AG04449 (cell line): ENCODE measurements at regions of chr11 and their contacts with region 1.

Region 1: GRCh38 chr11:87290304-87290922 is 252.7 kb downstream of the TMEM135 start:
- DNase-seq: peak; percentile 19
- H3K4me3 ChIP-seq: no peak overlapping the region
- CTCF ChIP-seq: peak; percentile 26

Region 2: DNA sequence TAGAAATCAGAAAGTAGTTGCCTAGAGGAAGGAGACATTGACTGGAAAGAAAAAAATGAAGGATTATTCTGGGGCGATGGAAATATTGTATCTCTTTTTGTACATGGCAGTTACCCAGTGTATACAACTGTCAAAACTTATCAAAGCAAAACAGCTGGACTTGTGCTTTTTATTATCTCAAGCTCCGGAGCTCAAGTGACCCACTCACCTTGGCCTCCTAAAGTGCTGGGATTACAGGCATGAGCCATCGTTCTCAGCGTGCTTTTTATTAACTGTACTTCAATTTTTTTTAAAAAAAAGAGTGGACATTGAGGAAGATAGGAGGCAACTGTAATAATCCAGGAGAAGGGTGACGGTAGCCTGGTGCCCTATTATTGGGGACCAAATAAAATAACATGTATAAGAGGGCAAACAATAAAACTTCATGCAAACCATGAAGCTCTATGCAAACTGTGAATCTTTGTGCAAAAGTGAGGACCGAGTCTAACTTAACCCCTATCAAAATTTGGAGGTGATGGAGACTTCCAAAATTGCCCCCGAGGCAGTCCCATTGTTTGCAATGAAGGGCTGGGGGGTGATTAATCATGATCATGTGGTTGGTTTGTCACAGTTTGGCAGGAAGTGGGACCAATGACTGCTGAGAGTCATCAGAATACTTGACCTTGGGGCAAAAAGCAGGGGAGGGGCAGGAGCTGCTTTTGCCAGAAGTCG is 358.7 kb before region 1 on chr11:
- CTCF ChIA-PET with region 1: interaction called, 241 read pairs
- POLR2A ChIA-PET with region 1: no interaction called
- DNase-seq: no peak
- H3K4me3 ChIP-seq: no peak overlapping the region
- CTCF ChIP-seq: no peak

Region 3: GRCh38 chr11:86947541-86947940 is 342.9 kb before region 1 on chr11:
- CTCF ChIA-PET with region 1: interaction called, 241 read pairs
- POLR2A ChIA-PET with region 1: no interaction called
- DNase-seq: no peak
- H3K4me3 ChIP-seq: no peak overlapping the region
- CTCF ChIP-seq: no peak

Region 4: DNA sequence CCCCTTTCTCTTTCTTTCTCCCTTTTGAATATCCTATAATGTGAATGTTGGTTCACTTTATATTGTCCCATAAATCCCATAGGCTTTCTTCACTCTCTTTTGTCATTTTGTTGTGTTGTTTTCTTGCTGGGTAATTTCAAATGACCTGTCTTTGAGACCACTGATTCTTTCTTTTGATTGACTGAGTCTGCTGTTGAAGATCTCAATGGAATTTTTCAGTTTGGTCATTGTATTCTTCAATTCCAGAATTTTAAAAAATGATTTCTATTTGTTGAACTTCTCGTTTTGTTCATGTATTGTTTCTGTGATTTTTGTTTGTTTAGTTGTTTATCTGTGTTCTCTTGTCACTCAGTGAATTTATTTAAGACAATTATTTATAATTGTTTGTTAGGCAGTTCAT is 317.7 kb before region 1 on chr11:
- CTCF ChIA-PET with region 1: interaction called, 12 read pairs
- POLR2A ChIA-PET with region 1: no interaction called
- DNase-seq: no peak
- H3K4me3 ChIP-seq: no peak overlapping the region
- CTCF ChIP-seq: no peak

Region 5: DNA sequence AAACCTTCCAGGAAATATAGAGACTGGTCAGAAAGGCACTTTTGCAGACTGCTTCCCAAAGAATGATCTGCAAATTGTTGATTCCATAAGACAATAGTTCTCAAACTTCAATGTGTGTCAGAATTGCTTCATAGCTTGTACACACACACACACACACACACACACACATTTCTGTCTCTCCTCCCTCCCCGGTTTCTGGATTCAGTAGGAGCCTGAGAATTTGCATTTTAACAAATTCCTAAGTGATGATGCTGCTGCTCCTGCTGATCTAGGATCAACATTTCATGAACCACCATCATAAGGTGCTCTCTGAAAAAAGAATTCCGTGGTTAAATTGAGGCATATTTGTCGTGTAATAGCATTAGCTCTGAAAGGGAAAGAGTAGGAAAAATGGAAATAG is 299.9 kb before region 1 on chr11:
- CTCF ChIA-PET with region 1: interaction called, 53 read pairs
- POLR2A ChIA-PET with region 1: no interaction called
- DNase-seq: no peak
- H3K4me3 ChIP-seq: no peak overlapping the region
- CTCF ChIP-seq: no peak

Region 6: GRCh38 chr11:87300640-87301380 is 10.4 kb after region 1 on chr11:
- CTCF ChIA-PET with region 1: interaction called, 31 read pairs
- POLR2A ChIA-PET with region 1: no interaction called
- DNase-seq: no peak
- H3K4me3 ChIP-seq: no peak overlapping the region
- CTCF ChIP-seq: no peak